ENCODE measurements at regions of chr3 and their contacts with region 1.

Region 1: GRCh38 chr3:195442573-195443390 is at the start of gene ACAP2:
- DNase-seq: peak; percentile 99 to 100 (median 100)
- H3K4me3 ChIP-seq: peak within 1 kb of the TSS; percentile 68 to 100 (median 94)
- H3K27ac ChIP-seq: peak within 1 kb of the TSS; percentile 57 to 99 (median 93)
- H3K27me3 ChIP-seq: no peaks in the 10 kb centered on the region
- CTCF ChIP-seq: peak in 12 of 56 donors; percentile 4 to 45 (median 14)
- total RNA-seq, gene ACAP2: 71.1 to 126 (median 94.7) TPM

Region 2: DNA sequence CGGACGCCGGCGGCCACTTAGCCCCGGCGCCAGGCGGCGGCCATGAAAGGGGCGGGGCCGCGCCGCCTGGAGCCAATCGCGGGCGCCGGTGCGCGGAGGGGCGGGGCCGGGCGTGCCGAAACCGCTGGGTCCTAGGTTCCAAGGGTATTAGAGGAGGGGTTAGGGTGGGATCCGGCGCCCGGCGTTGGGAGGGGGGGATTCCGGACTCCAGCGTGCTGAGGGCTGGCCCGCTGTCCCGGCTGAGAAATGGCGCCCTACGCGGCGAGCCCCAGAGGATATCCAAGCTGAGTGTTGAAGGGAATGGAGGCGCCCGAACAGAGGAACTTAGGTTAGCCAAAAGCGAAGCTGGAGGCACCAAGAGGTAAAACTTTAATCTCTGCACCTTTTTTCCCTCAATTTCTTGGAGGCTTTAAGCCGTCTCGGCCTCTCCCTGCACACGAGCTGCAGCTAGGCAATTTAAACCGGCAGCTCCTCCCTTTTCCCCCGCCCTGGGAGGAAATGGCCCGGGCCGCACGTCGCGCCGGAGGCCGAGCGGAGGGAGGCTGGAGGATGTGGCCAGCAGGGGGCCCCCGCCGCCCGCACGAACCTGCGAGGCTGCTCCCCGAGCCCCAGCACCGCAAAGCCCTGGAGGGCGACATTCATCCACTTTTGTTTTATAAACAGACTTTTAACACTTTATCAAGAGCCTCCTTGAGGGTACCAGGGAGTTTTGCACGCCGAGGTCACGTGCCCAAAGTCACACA is 171.5 kb before region 1 on chr3 and contains the start of gene XXYLT1:
- intact Hi-C with region 1: loop called (anchors 2 kb)
- DNase-seq: peak; percentile 81 to 94 (median 84)
- H3K4me3 ChIP-seq: peak within 1 kb of the TSS; percentile 72 to 98 (median 89)
- H3K27ac ChIP-seq: peak within 1 kb of the TSS; percentile 53 to 97 (median 91)
- H3K27me3 ChIP-seq: no peaks in the 10 kb centered on the region
- CTCF ChIP-seq: peak; percentile 81 to 99 (median 96)
- total RNA-seq, gene XXYLT1: 7.2 to 19.3 (median 13.0) TPM

Region 3: DNA sequence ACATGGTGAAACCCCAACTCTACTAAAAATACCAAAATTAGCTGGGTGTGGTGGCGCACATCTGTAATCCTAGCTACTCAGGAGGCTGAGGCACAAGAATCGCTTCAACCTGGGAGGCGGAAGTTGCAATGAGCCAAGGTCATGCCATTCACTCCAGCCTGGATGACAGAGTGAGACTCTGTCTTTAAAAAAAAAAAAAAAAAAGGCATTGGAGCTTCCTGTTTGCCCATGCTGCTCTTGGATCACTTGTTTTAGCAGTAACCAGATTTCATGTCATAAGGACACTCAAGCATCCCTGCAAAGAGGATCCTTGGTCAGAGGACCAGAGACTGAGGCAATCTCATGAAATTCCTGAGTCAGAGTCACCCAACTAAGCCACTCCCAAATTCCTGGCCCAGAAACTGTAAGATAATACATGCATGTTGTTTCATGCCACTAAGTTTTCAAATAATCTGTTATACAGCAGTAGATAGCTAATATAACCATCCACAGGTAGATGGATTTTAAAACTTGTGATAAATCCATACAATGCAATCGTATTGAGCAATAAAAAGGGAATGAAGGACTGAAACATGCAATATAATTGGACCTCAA is 89.8 kb before region 1 on chr3:
- intact Hi-C with region 1: loop called (anchors 1 to 10 kb)
- DNase-seq: no peak
- H3K4me3 ChIP-seq: no peak overlapping the region
- H3K27ac ChIP-seq: no peak overlapping the region
- H3K27me3 ChIP-seq: no peaks in the 10 kb centered on the region
- CTCF ChIP-seq: no peak

Region 4: GRCh38 chr3:195522254-195523023 is 79.7 kb after region 1 on chr3:
- intact Hi-C with region 1: loop called in 1 of 2 experiments (anchors 5 kb)
- DNase-seq: no peak
- H3K4me3 ChIP-seq: peak overlapping the region in 39 of 59 donors; percentile 3 to 48 (median 24)
- H3K27ac ChIP-seq: no peak overlapping the region
- H3K27me3 ChIP-seq: no peaks in the 10 kb centered on the region
- CTCF ChIP-seq: peak; percentile 73 to 99 (median 89)

Region 5: DNA sequence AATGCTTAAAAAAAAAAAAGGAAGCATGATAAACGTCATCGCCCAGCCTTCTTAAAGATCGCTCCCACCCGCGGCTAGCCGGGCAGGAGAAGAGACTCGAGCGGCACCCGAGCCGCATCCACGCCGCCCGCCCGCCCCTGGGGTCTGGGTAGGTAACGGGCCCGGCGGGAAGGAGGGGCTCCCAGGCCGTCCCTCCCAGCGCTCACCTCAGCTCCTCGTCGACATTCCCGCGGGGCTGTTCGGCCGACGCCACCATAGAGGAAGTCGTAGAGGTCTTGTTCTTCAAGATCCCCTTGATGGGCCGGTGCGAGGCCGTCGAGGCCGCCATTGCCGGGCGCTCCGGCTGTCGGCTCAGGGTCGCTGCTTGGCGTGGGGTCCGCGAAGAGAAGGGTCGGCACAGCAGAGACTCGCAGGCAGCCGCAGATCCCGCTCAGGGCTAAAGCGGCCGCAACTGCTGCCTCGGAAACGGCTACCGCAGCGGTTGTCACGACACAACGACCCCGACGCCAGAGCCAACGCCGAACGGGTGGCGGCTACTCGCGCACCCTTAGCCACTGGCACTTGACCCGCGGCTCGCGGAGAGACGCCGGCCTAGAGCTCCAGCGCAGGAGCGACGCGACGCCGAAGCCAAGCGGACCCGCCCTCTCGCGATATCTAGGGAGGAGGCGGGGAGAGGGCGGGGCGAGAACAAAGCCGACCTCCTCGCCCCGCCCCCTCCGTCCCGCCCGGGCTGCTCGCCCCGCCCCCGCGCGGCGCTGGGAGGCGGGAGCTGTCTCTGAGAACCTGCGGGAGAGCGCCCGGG is 100.1 kb after region 1 on chr3 and contains the start of gene PPP1R2:
- intact Hi-C with region 1: loop called in 1 of 2 experiments (anchors 2 kb)
- DNase-seq: peak; percentile 81 to 95 (median 92)
- H3K4me3 ChIP-seq: peak within 1 kb of the TSS; percentile 59 to 100 (median 88)
- H3K27ac ChIP-seq: peak within 1 kb of the TSS in 58 of 59 donors; percentile 19 to 92 (median 81)
- H3K27me3 ChIP-seq: no peaks in the 10 kb centered on the region
- CTCF ChIP-seq: peak in 23 of 56 donors; percentile 6 to 47 (median 24)
- total RNA-seq, gene PPP1R2: 25.2 to 68.8 (median 47.3) TPM

Measured in dorsolateral prefrontal cortex (tissue), 120 donors.